ENCODE measurements at regions of chr2 and their contacts with region 1.

Region 1: GRCh38 chr2:11129598-11130449 is 25.4 kb upstream of the SLC66A3 start:
- DNase-seq: peak; percentile 73
- H3K4me3 Mint-ChIP-seq: peak overlapping the region; percentile 61
- H3K27ac Mint-ChIP-seq: no peak overlapping the region
- H3K4me1 Mint-ChIP-seq: peaks cover 5% of the 10 kb centered on the region
- H3K27me3 Mint-ChIP-seq: peaks cover 14% of the 10 kb centered on the region

Region 2: DNA sequence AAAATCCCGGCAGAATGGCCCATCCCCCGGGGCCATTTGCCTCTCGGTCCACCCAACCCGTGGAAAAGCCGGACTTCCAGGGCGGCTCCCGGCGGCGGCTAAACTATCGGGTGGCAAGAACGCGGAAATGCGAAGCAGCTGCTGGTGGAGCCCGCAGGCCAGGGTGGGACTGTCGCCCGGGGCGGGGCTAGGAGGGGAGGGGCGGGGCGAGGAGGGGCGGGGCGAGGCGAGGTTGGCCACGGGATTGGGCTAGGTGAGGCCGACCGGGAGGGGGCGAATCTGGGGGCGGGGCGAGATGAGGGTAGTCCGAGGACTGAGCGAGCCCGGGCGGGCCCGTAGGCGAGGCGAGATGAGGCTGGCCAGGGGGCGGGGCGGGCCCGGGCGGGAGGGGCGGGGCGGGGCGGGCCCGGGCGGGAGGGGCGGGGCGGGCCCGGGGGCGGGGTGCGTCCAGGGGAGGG is 25.1 kb after region 1 on chr2:
- intact Hi-C with region 1: loop called (anchors 1 kb)
- DNase-seq: peak; percentile 94
- H3K4me3 Mint-ChIP-seq: peak overlapping the region; percentile 83
- H3K27ac Mint-ChIP-seq: peak overlapping the region; percentile 75
- H3K4me1 Mint-ChIP-seq: peaks cover 9% of the 10 kb centered on the region
- H3K27me3 Mint-ChIP-seq: peaks cover 13% of the 10 kb centered on the region

Region 3: GRCh38 chr2:11169333-11169732 is 39.5 kb after region 1 on chr2:
- intact Hi-C with region 1: no loop called
- DNase-seq: no peak
- H3K4me3 Mint-ChIP-seq: no peak overlapping the region
- H3K27ac Mint-ChIP-seq: no peak overlapping the region
- H3K4me1 Mint-ChIP-seq: no peaks in the 10 kb centered on the region
- H3K27me3 Mint-ChIP-seq: no peaks in the 10 kb centered on the region

Region 4: GRCh38 chr2:11446733-11447248 is 317.0 kb after region 1 on chr2:
- intact Hi-C with region 1: loop called (anchors 1 kb)
- DNase-seq: peak; percentile 12
- H3K4me3 Mint-ChIP-seq: no peak overlapping the region
- H3K27ac Mint-ChIP-seq: no peak overlapping the region
- H3K4me1 Mint-ChIP-seq: no peaks in the 10 kb centered on the region
- H3K27me3 Mint-ChIP-seq: no peaks in the 10 kb centered on the region

Region 5: GRCh38 chr2:11465497-11466406 is 335.9 kb after region 1 on chr2 and contains the start of gene E2F6:
- intact Hi-C with region 1: loop called (anchors 5 kb)
- DNase-seq: peak; percentile 80
- H3K4me3 Mint-ChIP-seq: peak within 1 kb of the TSS; percentile 96
- H3K27ac Mint-ChIP-seq: peak within 1 kb of the TSS; percentile 86
- H3K4me1 Mint-ChIP-seq: peaks cover 20% of the 10 kb centered on the region
- H3K27me3 Mint-ChIP-seq: no peaks in the 10 kb centered on the region
- total RNA-seq, gene E2F6: 16.8 and 18.2 TPM in 2 replicates

Region 6: GRCh38 chr2:11583840-11584524 is 454.2 kb after region 1 on chr2:
- intact Hi-C with region 1: loop called (anchors 1 kb)
- DNase-seq: peak; percentile 55
- H3K4me3 Mint-ChIP-seq: no peak overlapping the region
- H3K27ac Mint-ChIP-seq: peak overlapping the region; percentile 47
- H3K4me1 Mint-ChIP-seq: peaks cover 13% of the 10 kb centered on the region
- H3K27me3 Mint-ChIP-seq: no peaks in the 10 kb centered on the region

Region 7: DNA sequence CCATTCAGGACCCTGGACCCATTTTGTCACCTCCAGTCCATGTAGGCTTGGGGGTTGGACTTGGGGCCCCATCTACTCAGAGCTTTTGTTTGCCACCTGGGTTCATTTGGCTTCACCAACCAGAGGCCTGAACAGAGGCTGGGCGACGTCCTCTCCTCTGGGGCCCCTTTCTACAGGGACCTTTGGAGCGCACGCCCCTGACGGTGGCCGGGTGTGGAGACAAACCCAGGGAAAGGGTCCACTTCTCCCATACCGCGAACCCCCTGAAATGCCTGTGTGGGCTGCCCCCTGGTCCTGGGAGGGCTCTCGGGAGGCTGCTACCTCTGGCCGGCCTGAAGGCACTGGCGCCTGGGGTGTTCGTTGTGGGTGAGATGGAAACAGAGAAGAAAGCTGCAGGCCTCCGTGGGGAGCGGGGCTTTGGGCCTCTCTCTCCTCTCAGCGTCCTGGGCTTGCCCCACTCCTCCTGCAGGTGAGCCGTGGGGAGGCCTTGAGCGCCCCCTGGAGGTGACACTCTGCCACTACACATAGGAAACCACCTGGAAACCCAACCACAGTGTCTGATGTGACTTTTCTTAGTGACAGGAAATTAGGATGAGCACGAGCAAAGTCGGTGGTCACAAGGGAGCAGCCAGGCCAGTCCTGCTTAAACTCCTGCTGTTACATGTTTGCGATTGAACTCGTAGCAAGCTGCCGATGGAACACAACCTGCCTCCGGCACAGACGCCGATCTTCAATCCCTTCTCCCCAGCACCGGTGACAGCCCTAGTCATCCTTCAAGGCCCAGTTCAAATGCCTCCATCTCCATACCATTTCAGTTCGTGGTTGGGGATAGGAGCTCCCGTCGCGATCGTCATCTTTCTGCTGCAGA is 552.1 kb after region 1 on chr2:
- intact Hi-C with region 1: loop called (anchors 5 kb)
- DNase-seq: peak; percentile 52
- H3K4me3 Mint-ChIP-seq: no peak overlapping the region
- H3K27ac Mint-ChIP-seq: no peak overlapping the region
- H3K4me1 Mint-ChIP-seq: peaks cover 5% of the 10 kb centered on the region
- H3K27me3 Mint-ChIP-seq: peaks cover 29% of the 10 kb centered on the region